ENCODE measurements at regions of chr1 and their contacts with region 1.

Region 1: GRCh38 chr1:89843281-89844121 is 22.7 kb downstream of the LRRC8D start:
- DNase-seq: peak; percentile 71
- ATAC-seq: peak; percentile 84
- H3K4me3 Mint-ChIP-seq: peak overlapping the region; percentile 85
- H3K27ac Mint-ChIP-seq: peak overlapping the region; percentile 66
- H3K4me1 Mint-ChIP-seq: peaks cover 50% of the 10 kb centered on the region
- H3K27me3 Mint-ChIP-seq: no peaks in the 10 kb centered on the region
- CTCF ChIP-seq: peak; percentile 67

Region 2: GRCh38 chr1:89820422-89821321 is 22.8 kb before region 1 on chr1 and contains the start of gene LRRC8D:
- CTCF ChIA-PET with region 1: interaction called, 6 read pairs
- POLR2A ChIA-PET with region 1: interaction called, 10 read pairs
- DNase-seq: peak; percentile 90
- ATAC-seq: peak; percentile 92
- H3K4me3 Mint-ChIP-seq: peak within 1 kb of the TSS; percentile 90
- H3K27ac Mint-ChIP-seq: peak within 1 kb of the TSS; percentile 97
- H3K4me1 Mint-ChIP-seq: peaks cover 42% of the 10 kb centered on the region
- H3K27me3 Mint-ChIP-seq: peaks cover 6% of the 10 kb centered on the region
- CTCF ChIP-seq: no peak
- total RNA-seq, gene LRRC8D: 42.6 to 45.4 TPM (median 42.8 TPM) in 3 replicates

Region 3: GRCh38 chr1:89833183-89834082 is 10.1 kb before region 1 on chr1:
- CTCF ChIA-PET with region 1: interaction called, 10 read pairs
- POLR2A ChIA-PET with region 1: interaction called, 3 read pairs
- DNase-seq: no peak
- ATAC-seq: no peak
- H3K4me3 Mint-ChIP-seq: no peak overlapping the region
- H3K27ac Mint-ChIP-seq: peak overlapping the region; percentile 67
- H3K4me1 Mint-ChIP-seq: peaks cover 78% of the 10 kb centered on the region
- H3K27me3 Mint-ChIP-seq: no peaks in the 10 kb centered on the region
- CTCF ChIP-seq: no peak

Region 4: DNA sequence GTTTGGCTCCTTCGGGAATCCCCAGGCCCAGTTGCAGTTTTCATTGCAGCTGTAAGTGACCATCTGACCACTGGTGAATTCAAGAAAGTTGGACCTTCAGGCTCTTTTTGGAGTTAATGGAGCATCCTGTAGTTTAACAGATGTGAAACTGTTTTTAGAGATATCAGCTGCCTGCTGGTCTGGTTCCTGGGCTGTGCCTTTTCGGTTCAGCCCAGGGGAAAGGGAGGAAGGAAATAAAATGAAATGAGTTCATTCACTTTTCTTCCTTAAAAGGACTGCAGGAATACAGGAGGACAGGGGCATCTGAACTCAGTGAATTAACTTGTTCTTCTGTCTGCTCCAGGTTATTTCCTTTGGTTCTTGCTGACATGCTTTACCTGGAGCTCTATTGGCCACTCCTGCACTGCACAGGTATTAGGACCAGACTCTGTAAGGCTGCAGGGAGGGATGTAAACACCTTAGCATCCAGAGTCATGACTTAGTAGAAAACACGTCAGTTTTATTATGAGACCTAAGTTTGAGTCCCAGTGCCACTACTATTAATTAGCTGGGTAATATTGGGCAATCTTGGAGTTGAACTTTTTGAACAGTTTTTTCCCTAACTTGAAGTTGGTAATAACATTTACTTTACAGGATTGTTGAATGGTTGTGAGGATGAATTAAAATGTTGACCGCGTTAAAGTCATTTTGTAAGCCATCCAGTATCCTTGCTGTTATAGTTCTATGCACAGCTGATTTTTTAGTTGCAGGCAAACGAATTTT is 60.9 kb after region 1 on chr1:
- CTCF ChIA-PET with region 1: interaction called, 11 read pairs
- POLR2A ChIA-PET with region 1: no interaction called
- DNase-seq: no peak
- ATAC-seq: no peak
- H3K4me3 Mint-ChIP-seq: no peak overlapping the region
- H3K27ac Mint-ChIP-seq: peak overlapping the region; percentile 83
- H3K4me1 Mint-ChIP-seq: peaks cover 91% of the 10 kb centered on the region
- H3K27me3 Mint-ChIP-seq: no peaks in the 10 kb centered on the region
- CTCF ChIP-seq: no peak

Measured in WTC11 (cell line).